Calu3 (cell line): ENCODE measurements at regions of chr2 and their contacts with region 1.

Region 1: DNA sequence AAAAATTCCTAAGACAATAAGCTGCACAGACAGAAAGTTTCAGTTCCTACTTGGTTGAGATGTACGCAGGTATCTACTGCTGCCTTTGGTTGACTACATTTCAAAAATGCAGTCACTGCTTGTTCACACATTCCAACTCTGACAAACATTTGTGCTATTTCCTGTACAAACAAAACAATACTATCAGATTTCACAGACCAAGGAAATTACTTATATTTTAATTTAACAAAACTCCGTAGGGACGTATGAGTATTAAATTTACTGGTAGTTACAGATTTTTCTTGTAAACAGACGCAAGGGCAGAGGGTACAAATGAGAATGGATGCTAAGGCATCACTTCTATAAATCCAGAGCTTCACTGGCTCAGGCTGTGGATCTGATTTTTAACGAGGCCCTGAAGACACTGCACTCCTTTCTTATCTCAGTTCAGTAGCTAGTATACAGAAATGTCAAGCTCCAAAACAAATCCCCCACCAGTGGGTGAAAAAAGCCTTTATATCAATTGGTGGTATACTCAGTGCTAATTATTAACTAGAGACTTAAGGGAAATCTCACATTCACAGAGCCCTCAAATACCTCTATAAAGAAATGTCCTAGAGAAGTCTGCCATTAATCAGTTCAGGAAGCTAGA is 31.7 kb upstream of the TTC32 start:
- DNase-seq: peak; percentile 32
- H3K4me3 Mint-ChIP-seq: peak overlapping the region; percentile 46
- H3K27ac Mint-ChIP-seq: peak overlapping the region; percentile 85
- H3K4me1 Mint-ChIP-seq: no peaks in the 10 kb centered on the region
- H3K27me3 Mint-ChIP-seq: no peaks in the 10 kb centered on the region
- CTCF ChIP-seq: no peak

Region 2: DNA sequence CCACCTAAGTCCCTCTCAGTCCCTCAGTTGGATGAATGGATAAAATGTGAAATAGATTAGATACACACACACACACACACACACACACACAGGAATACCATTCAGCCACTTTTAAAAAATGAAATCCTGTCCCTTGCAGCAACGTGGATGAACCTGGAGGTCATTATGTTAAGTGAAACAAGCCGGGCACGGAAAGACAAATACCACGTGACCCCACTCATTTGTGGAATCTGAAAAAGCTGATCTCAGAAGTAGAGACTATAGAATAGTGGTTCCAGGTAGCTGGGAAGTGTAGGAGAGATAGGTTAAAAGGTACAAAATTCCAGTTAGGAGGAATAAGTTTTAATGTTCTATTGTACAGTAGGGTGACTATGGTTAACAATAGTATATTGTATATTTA is 62.7 kb before region 1 on chr2:
- CTCF ChIA-PET with region 1: no interaction called
- intact Hi-C with region 1: loop called (anchors 1 kb)
- DNase-seq: no peak
- H3K4me3 Mint-ChIP-seq: no peak overlapping the region
- H3K27ac Mint-ChIP-seq: no peak overlapping the region
- H3K4me1 Mint-ChIP-seq: no peaks in the 10 kb centered on the region
- H3K27me3 Mint-ChIP-seq: peaks cover 20% of the 10 kb centered on the region
- CTCF ChIP-seq: no peak

Region 3: DNA sequence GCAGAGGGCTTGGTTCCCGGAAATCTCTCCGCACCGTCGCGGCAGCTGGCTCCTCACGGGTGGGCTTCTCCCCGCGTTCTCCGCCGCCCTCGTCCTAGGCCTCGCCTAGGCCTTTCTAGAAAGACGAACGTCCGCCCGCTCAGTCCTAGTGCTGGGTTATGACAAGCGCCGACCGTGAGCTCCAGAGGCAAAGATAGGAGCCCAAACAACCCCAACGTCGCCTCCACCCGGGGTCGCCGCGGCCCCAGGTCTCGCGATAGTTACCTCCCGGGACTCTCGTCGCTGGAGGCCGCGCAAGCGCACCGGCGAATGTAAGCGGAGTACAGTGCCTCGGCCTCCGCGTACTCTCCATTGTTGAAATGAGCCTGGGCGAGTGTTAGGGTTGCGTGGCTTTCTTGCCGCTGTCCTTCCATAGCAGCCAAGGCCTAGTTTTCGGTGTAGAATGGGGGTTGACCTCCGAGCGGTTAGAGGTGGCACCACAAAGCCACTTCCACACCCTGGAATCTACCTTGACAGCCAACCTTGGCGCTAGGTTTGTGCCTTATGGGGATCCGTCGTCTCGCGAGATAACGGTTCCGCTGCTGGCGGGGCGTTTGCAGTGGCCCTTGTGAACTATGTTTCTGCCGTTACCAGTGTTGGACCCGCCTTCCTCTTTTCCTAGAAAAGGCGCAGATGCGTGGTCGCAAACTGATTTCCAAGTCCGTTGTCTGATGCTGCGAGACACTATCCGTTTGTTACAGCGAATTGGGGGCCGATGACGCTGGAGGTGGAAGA is 31.8 kb before region 1 on chr2 and contains the start of gene TTC32:
- CTCF ChIA-PET with region 1: interaction called, 4 read pairs
- intact Hi-C with region 1: loop called (anchors 1 kb)
- DNase-seq: peak; percentile 92
- H3K4me3 Mint-ChIP-seq: peak within 1 kb of the TSS; percentile 89
- H3K27ac Mint-ChIP-seq: peak within 1 kb of the TSS; percentile 95
- H3K4me1 Mint-ChIP-seq: no peaks in the 10 kb centered on the region
- H3K27me3 Mint-ChIP-seq: no peaks in the 10 kb centered on the region
- CTCF ChIP-seq: no peak
- total RNA-seq, gene TTC32: 13.6 and 14.4 TPM in 2 replicates

Region 4: GRCh38 chr2:19911799-19912509 is 21.5 kb before region 1 on chr2:
- CTCF ChIA-PET with region 1: interaction called, 5 read pairs
- intact Hi-C with region 1: loop called (anchors 1 kb)
- DNase-seq: peak; percentile 63
- H3K4me3 Mint-ChIP-seq: no peak overlapping the region
- H3K27ac Mint-ChIP-seq: peak overlapping the region; percentile 45
- H3K4me1 Mint-ChIP-seq: peaks cover 19% of the 10 kb centered on the region
- H3K27me3 Mint-ChIP-seq: no peaks in the 10 kb centered on the region
- CTCF ChIP-seq: no peak